Activated CD4-positive, alpha-beta memory T cell treated with anti-CD3 and anti-CD28 coated beads, Interleukin-2, amount 10 ng/mL, durations not matched to agents 7 days and 5 days (primary cell): ENCODE measurements at regions of chr20 and their contacts with region 1.

Region 1: DNA sequence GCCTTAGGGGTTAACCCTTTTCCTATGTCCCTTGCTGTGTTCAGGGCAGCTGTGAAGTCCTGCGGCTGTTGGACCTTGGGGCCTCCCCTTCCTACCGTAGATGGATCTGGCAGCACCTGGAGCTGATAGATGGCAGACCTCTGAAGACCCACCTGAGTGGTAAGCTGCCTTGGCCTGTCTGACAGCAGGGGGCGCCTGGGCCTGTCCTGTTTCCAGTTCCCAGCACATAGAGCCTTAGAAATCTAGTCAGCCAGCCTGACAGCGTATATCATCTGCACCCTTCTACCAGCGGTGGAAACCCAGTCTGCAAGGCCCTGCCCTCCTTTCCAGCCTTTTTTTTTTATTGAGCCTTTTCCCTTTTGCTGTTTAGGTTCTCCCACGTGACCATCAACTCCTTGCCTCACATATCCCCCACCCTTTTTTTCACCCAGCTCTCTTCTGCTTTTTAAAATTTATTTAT is 26.6 kb downstream of the CNBD2 start:
- DNase-seq: peak; percentile 78
- H3K4me3 Mint-ChIP-seq: no peak overlapping the region
- H3K27ac Mint-ChIP-seq: no peak overlapping the region
- H3K4me1 Mint-ChIP-seq: peaks cover 6% of the 10 kb centered on the region
- H3K27me3 Mint-ChIP-seq: peaks cover 8% of the 10 kb centered on the region

Region 2: GRCh38 chr20:35837577-35838198 is 157.3 kb before region 1 on chr20:
- CTCF ChIA-PET with region 1: no interaction called
- POLR2A ChIA-PET with region 1: no interaction called
- DNase-seq: no peak
- H3K4me3 Mint-ChIP-seq: no peak overlapping the region
- H3K27ac Mint-ChIP-seq: no peak overlapping the region
- H3K4me1 Mint-ChIP-seq: peaks cover 27% of the 10 kb centered on the region
- H3K27me3 Mint-ChIP-seq: no peaks in the 10 kb centered on the region

Region 3: GRCh38 chr20:35917077-35917476 is 77.9 kb before region 1 on chr20:
- CTCF ChIA-PET with region 1: no interaction called
- POLR2A ChIA-PET with region 1: no interaction called
- DNase-seq: no peak
- H3K4me3 Mint-ChIP-seq: no peak overlapping the region
- H3K27ac Mint-ChIP-seq: no peak overlapping the region
- H3K4me1 Mint-ChIP-seq: peaks cover 3% of the 10 kb centered on the region
- H3K27me3 Mint-ChIP-seq: no peaks in the 10 kb centered on the region

Region 4: GRCh38 chr20:35981969-35982368 is 13.1 kb before region 1 on chr20:
- CTCF ChIA-PET with region 1: interaction called, 42 read pairs
- POLR2A ChIA-PET with region 1: no interaction called
- DNase-seq: peak; percentile 5
- H3K4me3 Mint-ChIP-seq: no peak overlapping the region
- H3K27ac Mint-ChIP-seq: no peak overlapping the region
- H3K4me1 Mint-ChIP-seq: peaks cover 2% of the 10 kb centered on the region
- H3K27me3 Mint-ChIP-seq: peaks cover 3% of the 10 kb centered on the region

Region 5: DNA sequence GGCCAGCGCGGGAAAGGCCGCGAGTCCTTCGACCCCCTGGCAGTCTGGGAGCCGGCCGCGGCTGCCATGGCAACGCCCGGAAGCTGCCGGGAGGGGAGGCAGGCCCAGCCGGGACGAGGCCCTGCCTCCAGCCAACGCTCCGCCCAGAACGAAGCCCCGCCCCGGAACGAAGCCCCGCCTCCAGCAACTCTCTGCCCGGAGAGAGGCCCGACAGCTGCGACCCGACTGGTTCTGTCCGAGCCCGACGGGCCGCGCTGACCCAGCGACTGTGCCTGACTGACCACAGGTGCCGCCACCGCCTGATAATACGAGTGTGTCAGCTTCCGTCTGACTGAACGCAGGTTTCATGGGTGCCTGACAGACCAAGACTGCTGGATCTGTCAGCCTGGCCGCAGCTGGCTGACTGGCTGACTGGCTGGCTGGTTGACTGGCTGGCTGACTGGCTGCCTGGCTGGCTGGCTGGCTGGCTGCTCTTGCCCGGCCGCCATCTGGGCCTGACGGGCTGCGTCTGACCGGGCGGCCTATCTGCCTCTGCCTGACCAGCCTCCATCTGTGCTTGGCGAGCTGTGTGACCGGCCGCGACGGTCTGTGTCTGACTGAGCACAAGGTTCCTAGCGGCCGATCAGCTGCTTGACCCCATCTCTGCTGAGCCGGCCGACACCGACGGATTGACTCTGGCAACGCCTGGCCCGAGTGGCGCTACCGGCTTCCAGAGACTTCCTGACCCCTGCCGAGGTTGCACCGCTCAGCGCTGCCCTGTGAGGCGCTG is 69.8 kb after region 1 on chr20:
- CTCF ChIA-PET with region 1: interaction called, 13 read pairs
- POLR2A ChIA-PET with region 1: no interaction called
- DNase-seq: peak; percentile 93
- H3K4me3 Mint-ChIP-seq: peak overlapping the region; percentile 80
- H3K27ac Mint-ChIP-seq: no peak overlapping the region
- H3K4me1 Mint-ChIP-seq: peaks cover 9% of the 10 kb centered on the region
- H3K27me3 Mint-ChIP-seq: peaks cover 32% of the 10 kb centered on the region

Region 6: DNA sequence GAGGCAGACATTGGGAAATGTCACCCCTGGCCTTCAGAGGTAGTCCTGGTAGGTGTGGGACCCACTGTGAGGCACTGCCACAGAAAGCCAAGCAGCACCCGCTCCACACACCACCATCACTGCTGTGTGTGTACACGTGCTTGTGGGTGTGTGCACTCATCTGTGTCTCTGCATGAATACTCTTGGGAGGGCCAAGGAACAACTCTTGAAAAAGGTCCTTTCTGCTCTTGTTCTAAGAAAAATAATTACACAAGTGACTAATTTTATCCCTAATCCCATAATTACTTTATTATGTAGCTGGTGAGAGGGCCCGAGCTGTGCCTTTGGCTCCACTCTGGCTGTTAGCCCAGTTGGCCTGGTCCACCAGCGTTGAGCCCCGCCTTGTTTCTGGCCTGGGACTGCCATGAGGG is 137.8 kb after region 1 on chr20:
- CTCF ChIA-PET with region 1: interaction called, 244 read pairs
- POLR2A ChIA-PET with region 1: no interaction called
- DNase-seq: no peak
- H3K4me3 Mint-ChIP-seq: no peak overlapping the region
- H3K27ac Mint-ChIP-seq: no peak overlapping the region
- H3K4me1 Mint-ChIP-seq: no peaks in the 10 kb centered on the region
- H3K27me3 Mint-ChIP-seq: peaks cover 1% of the 10 kb centered on the region

Region 7: GRCh38 chr20:36154700-36155628 is 159.9 kb after region 1 on chr20 and contains the start of gene EPB41L1:
- CTCF ChIA-PET with region 1: interaction called, 18 read pairs
- POLR2A ChIA-PET with region 1: no interaction called
- DNase-seq: no peak
- H3K4me3 Mint-ChIP-seq: no peak within 1 kb of the TSS
- H3K27ac Mint-ChIP-seq: no peak within 1 kb of the TSS
- H3K4me1 Mint-ChIP-seq: peaks cover 2% of the 10 kb centered on the region
- H3K27me3 Mint-ChIP-seq: peaks cover 42% of the 10 kb centered on the region
- total RNA-seq, gene EPB41L1: 0.20 TPM in 1 of 2 experiments, not detected in the other